ENCODE measurements at regions of chr22 and their contacts with region 1.

Region 1: DNA sequence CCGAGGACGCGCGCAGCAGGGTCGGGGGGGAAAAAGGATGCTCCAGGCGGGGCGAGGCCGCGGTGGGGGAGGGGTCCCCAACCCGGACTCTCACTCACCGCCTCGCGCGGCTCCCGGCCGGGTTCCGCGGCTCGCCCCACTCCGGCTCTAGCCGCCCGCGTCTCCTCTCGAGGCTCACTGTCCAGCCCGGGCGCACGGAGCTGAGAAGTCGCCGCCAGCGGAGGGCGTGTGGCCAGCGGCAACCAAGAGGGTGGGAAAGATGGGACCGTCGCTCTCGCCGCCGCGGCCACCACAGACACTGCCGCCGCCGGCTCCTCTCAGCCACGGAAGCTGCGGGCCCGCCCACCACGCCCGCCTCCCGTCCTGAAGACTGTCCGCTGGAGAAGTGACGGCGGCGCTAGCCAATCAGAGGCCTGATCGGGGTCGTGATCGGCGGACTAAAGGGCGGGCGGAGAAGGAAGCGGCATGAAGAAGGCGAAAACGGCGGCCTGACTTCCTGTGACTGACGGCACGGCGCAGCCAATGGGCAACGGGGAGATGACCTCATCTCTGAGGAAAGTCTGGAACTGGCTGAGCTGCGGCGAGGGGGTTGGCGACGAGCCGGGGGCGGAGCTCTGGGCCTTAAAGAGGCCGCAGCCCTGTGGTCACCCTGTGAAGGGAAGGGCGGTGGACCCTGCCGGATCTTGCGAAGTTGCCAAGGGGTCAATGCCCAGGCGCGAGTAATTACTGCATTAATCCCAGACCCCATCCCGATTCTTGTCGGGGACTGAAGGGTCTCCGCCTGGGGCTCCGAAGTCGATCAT is at the start of gene MRTFA:
- DNase-seq: peak; percentile 100
- H3K4me3 Mint-ChIP-seq: peak within 1 kb of the TSS; percentile 91
- H3K27ac Mint-ChIP-seq: peak within 1 kb of the TSS; percentile 91
- H3K4me1 Mint-ChIP-seq: peaks cover 31% of the 10 kb centered on the region
- H3K27me3 Mint-ChIP-seq: no peaks in the 10 kb centered on the region
- total RNA-seq, gene MRTFA: 58.5 to 61.5 TPM

Region 2: GRCh38 chr22:40463017-40463631 is 173.5 kb before region 1 on chr22:
- CTCF ChIA-PET with region 1: no interaction called
- POLR2A ChIA-PET with region 1: interaction called, 12 read pairs
- DNase-seq: peak; percentile 62
- H3K4me3 Mint-ChIP-seq: peak overlapping the region; percentile 97
- H3K27ac Mint-ChIP-seq: peak overlapping the region; percentile 96
- H3K4me1 Mint-ChIP-seq: peaks cover 47% of the 10 kb centered on the region
- H3K27me3 Mint-ChIP-seq: no peaks in the 10 kb centered on the region

Region 3: DNA sequence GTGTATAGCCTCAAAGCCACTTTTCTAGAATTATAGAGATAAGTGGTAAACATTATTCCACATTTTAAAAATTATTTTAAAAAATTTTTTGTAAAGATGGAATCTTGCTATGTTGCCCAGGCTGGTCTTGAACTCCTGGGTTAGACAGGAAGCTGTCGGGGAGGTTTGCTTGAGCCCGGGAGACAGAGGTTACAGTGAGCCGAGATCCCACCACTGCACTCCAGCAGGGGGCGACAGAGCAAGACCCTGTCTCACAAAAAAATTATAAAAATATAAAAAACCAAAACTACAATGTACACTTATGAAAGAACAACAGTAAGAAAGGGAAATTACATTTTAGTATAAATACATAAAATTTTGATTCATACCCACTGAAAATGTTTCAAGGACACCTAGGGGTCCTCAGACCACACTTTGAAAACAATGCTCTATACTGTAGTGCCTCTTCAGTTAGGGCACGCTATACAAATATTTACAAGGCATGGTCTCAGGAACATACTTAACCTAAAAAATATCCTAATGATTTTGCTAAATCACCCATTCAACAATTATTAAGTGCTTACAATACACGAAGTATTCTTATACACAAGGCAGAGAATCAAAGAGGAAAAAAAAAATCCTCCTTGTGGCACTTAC is 111.2 kb before region 1 on chr22:
- CTCF ChIA-PET with region 1: interaction called, 17 read pairs
- POLR2A ChIA-PET with region 1: interaction called, 59 read pairs
- DNase-seq: peak; percentile 73
- H3K4me3 Mint-ChIP-seq: no peak overlapping the region
- H3K27ac Mint-ChIP-seq: no peak overlapping the region
- H3K4me1 Mint-ChIP-seq: peaks cover 23% of the 10 kb centered on the region
- H3K27me3 Mint-ChIP-seq: no peaks in the 10 kb centered on the region

Region 4: GRCh38 chr22:40533712-40534378 is 102.7 kb before region 1 on chr22:
- CTCF ChIA-PET with region 1: interaction called, 6 read pairs
- POLR2A ChIA-PET with region 1: interaction called, 59 read pairs
- DNase-seq: peak; percentile 65
- H3K4me3 Mint-ChIP-seq: peak overlapping the region; percentile 73
- H3K27ac Mint-ChIP-seq: peak overlapping the region; percentile 73
- H3K4me1 Mint-ChIP-seq: peaks cover 57% of the 10 kb centered on the region
- H3K27me3 Mint-ChIP-seq: no peaks in the 10 kb centered on the region

Region 5: GRCh38 chr22:40610329-40610850 is 26.2 kb before region 1 on chr22:
- CTCF ChIA-PET with region 1: no interaction called
- POLR2A ChIA-PET with region 1: interaction called, 11 read pairs
- DNase-seq: no peak
- H3K4me3 Mint-ChIP-seq: no peak overlapping the region
- H3K27ac Mint-ChIP-seq: no peak overlapping the region
- H3K4me1 Mint-ChIP-seq: peaks cover 8% of the 10 kb centered on the region
- H3K27me3 Mint-ChIP-seq: no peaks in the 10 kb centered on the region